ENCODE measurements at regions of chr12 and their contacts with region 1.

Region 1: DNA sequence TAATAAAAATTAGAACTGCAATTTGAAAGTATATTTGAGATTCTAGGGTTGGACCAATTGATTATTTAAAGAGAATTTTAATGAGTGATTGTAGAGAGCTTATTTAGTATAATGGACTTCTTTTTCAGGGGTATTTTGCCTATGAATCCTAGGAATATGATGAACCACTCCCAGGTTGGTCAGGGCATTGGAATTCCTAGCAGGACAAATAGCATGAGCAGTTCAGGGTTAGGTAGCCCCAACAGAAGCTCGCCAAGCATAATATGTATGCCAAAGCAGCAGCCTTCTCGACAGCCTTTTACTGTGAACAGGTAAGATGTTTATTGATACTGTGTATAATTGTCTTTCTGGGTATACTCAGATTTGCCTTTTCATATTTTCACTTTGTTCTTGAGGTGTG is 35.9 kb upstream of the KCNMB4 start:
- DNase-seq: no peak
- H3K4me3 ChIP-seq: no peak overlapping the region
- H3K27ac ChIP-seq: no peak overlapping the region
- H3K4me1 ChIP-seq: peaks cover 5% of the 10 kb centered on the region
- H3K27me3 ChIP-seq: no peaks in the 10 kb centered on the region
- CTCF ChIP-seq: no peak

Region 2: DNA sequence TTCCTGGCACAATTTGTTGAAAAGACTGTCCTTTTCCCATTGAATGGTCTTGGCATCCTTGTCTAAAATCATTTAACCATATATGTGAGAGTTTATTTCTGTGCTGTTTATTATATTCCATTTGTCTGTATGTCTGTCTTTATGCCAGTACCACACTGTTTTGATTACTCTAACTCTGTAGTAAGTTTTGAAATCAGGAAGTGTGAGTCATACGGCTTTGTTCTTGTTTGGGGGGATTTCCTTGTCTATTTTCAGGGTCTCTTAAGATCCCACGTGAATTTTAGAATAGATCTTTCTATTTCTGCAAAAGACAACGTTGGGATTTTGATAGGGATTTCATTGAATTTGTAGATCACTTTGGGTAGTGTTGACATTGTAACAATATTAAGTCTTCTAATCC is 416.6 kb before region 1 on chr12:
- CTCF ChIA-PET with region 1: no interaction called
- POLR2A ChIA-PET with region 1: interaction called, 10 read pairs
- intact Hi-C with region 1: no loop called
- DNase-seq: no peak
- H3K4me3 ChIP-seq: no peak overlapping the region
- H3K27ac ChIP-seq: no peak overlapping the region
- H3K4me1 ChIP-seq: peaks cover 25% of the 10 kb centered on the region
- H3K27me3 ChIP-seq: no peaks in the 10 kb centered on the region
- CTCF ChIP-seq: no peak

Region 3: GRCh38 chr12:70032076-70032475 is 298.1 kb before region 1 on chr12:
- CTCF ChIA-PET with region 1: no interaction called
- POLR2A ChIA-PET with region 1: no interaction called
- intact Hi-C with region 1: no loop called
- DNase-seq: peak; percentile 76
- H3K4me3 ChIP-seq: no peak overlapping the region
- H3K27ac ChIP-seq: no peak overlapping the region
- H3K4me1 ChIP-seq: peaks cover 12% of the 10 kb centered on the region
- H3K27me3 ChIP-seq: no peaks in the 10 kb centered on the region
- CTCF ChIP-seq: no peak